GM12878 (cell line): ENCODE measurements at regions of chr1 and their contacts with region 1.

Region 1: DNA sequence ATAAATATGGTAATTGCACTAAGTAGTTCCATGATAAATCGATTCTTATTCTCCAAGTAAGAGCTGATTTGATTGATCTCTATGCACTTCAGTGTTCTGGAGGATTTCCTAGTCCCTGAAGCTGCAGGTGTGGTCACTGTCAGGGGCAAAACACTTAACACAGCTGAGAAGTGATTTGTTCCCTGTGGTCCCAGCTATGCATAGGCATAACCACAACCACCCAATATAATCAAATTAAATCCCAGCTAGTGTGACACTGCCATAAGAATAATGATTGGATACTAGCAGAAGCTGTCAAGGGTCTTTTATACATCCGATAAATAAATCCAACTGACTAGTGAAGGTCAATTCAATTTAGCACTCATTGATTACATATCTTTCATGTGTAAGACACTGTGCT is 60.1 kb downstream of the PTGER3 start:
- DNase-seq: no peak
- ATAC-seq: no peak
- H3K4me3 ChIP-seq: no peak overlapping the region
- H3K27ac ChIP-seq: no peak overlapping the region
- H3K4me1 ChIP-seq: no peaks in the 10 kb centered on the region
- H3K27me3 ChIP-seq: no peaks in the 10 kb centered on the region; a peak in 1 of 4 replicates
- CTCF ChIP-seq: no peak
- EP300 ChIP-seq: no peak
- POLR2A ChIP-seq: no peak
- RAD21 ChIP-seq: no peak

Region 2: DNA sequence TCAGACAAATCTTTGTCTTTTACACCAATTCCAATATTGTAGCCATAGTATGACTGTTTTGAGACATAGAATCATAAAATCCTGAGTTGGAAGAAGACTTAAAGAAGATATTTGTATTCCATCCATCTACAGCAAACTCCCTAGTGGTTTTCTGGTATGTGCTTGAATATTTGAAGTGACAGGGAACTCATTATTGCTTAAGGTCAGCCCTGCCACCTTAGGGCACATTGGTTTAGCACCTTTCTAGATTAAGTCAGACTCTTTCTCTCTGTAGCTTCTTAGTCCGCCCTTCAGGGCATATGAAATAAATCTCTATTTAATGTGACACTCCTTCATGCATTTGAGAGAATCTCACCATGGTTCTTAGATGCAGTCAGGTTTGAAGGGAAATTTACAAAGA is 10.3 kb after region 1 on chr1:
- CTCF ChIA-PET with region 1: interaction called, 10 read pairs
- POLR2A ChIA-PET with region 1: no interaction called
- RAD21 ChIA-PET with region 1: no interaction called
- SMC1A ChIA-PET with region 1: interaction called, 3 read pairs
- in situ Hi-C with region 1: no loop called
- intact Hi-C with region 1: no loop called
- DNase-seq: no peak
- ATAC-seq: no peak
- H3K4me3 ChIP-seq: no peak overlapping the region
- H3K27ac ChIP-seq: no peak overlapping the region
- H3K4me1 ChIP-seq: no peaks in the 10 kb centered on the region
- H3K27me3 ChIP-seq: peaks cover 0 to 2% of the 10 kb centered on the region in 2 experiments; a peak in 1 of 4 replicates
- CTCF ChIP-seq: no peak
- EP300 ChIP-seq: no peak
- POLR2A ChIP-seq: no peak
- RAD21 ChIP-seq: no peak